A673 (cell line): ENCODE measurements at regions of chr22 and their contacts with region 1.

Region 1: DNA sequence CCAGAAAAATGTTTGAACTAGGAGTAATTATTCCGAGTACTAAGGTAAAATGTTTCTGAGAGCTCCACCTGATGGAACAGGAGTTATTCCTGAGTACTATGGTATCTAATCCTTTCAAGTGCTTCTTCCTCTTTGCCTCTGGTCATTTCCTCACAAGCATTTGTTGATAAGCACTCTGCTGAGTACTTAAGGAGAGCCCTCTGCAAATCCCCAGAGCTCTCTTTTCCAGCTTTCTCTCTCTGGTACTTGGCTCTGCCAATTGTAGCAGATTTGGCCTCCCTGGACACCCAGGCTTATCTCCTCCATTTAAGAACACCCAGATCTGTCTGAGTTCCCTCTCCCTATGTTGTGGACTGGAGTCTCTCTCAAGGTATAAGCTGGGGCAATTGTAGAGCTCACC is 457.0 kb downstream of the MN1 start:
- DNase-seq: no peak
- H3K4me3 ChIP-seq: no peak overlapping the region
- H3K27ac ChIP-seq: no peak overlapping the region
- H3K4me1 ChIP-seq: peaks cover 8% of the 10 kb centered on the region
- H3K27me3 ChIP-seq: no peaks in the 10 kb centered on the region
- CTCF ChIP-seq: no peak

Region 2: GRCh38 chr22:27554106-27554811 is 209.7 kb after region 1 on chr22:
- CTCF ChIA-PET with region 1: no interaction called
- POLR2A ChIA-PET with region 1: interaction called, 10 read pairs
- intact Hi-C with region 1: no loop called
- DNase-seq: peak; percentile 94
- H3K4me3 ChIP-seq: no peak overlapping the region
- H3K27ac ChIP-seq: peak overlapping the region; percentile 68
- H3K4me1 ChIP-seq: peaks cover 15% of the 10 kb centered on the region
- H3K27me3 ChIP-seq: no peaks in the 10 kb centered on the region
- CTCF ChIP-seq: no peak